ENCODE measurements at regions of chr17 and their contacts with region 1.

Region 1: GRCh38 chr17:50169121-50169764 is 3.4 kb downstream of the SGCA start:
- DNase-seq: peak; percentile 68
- H3K4me3 Mint-ChIP-seq: peak overlapping the region; percentile 52
- H3K27ac Mint-ChIP-seq: no peak overlapping the region
- H3K4me1 Mint-ChIP-seq: peaks cover 19% of the 10 kb centered on the region
- H3K27me3 Mint-ChIP-seq: no peaks in the 10 kb centered on the region

Region 2: DNA sequence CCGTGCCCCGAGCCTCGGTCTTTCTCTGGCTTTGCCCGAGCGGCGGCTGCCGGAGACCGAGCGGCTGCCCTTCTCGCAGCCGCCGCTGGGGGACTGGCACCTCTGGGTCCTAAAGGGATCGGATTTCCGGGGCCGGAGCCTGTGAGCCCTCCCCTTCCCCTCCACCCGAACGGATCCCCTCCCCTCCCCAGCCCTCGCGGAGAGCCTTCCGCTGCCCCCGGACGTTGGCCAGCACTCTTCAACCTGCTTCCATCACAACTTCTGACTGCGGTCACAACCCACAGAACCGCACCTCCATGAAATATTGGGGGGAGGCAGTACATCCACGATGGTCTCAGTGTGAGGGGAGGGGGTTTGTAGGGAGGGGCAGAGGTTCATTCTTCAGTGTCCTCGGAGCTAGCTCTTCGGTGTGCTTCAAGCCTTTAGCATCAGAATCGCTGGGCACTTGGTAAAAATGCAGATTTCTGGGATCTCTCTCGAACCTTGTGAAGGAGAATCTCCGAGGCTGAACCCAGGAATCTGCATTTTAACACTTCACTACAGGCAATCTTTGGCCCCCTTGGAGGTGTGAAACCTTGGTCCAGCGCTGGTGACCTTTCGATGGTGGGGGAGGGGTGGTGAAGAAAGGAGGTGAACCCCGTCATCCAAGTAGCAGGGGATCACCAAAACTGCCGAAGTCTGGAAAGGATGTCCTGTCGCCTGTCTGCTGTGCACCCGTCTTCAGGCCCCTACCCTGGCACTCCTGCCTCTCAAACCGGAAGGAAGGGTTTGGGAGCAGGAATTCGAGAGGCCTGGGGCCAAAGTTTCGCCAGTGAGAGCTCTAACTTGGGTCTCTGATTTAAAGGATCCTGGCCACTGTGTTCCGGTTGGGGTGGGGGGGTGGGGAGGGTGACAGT is 18.0 kb before region 1 on chr17:
- CTCF ChIA-PET with region 1: interaction called, 15 read pairs
- POLR2A ChIA-PET with region 1: interaction called, 4 read pairs
- intact Hi-C with region 1: no loop called
- DNase-seq: peak; percentile 94
- H3K4me3 Mint-ChIP-seq: peak overlapping the region; percentile 87
- H3K27ac Mint-ChIP-seq: peak overlapping the region; percentile 97
- H3K4me1 Mint-ChIP-seq: peaks cover 38% of the 10 kb centered on the region
- H3K27me3 Mint-ChIP-seq: no peaks in the 10 kb centered on the region

Region 3: DNA sequence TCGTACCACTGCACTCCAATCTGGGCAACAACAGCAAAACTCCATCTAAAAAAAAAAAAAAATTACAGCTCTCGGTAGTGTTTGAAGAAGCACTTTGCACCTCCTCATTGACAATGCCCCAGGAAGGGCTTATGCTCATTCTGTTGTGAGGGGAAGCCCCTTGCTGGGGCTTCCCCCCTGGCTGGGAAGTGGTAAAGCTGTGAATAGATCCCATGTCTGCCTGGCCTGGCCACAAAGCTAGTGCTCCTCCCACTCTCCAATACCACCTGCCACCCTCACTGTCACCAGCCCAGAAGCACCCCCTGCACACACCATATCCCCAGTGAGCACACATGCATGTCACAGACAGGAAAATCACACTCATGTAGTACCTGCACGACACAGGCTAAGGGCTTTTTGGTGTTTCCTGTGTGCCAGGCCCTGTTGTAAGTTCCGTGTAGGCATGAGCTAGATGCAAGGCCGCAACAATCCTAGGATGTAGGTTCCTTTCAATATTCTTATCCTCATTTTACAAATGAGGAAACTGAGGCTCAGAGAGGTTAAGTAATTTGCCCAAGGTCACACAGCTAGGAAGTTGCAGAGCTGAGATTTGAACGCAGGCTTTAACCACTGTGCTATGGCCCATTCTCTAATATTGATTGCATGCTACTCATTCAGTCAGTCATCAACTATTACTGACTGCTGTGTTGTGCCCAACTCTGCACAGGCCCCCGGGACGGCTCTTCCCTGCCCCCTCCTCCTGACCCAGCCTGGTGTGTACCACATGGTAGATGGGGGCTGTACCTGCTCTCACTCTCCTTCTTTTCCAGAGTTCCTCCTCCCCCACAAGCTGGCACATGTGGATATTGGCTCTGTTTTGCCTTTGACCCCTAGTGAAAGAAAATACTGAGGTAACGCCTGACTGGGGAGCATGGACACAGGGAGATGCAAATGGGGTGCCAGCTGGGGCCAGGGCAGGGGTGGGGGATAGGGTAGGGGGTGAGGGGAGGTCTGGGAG is 44.1 kb after region 1 on chr17:
- CTCF ChIA-PET with region 1: interaction called, 11 read pairs
- POLR2A ChIA-PET with region 1: no interaction called
- intact Hi-C with region 1: no loop called
- DNase-seq: peak; percentile 85
- H3K4me3 Mint-ChIP-seq: no peak overlapping the region
- H3K27ac Mint-ChIP-seq: no peak overlapping the region
- H3K4me1 Mint-ChIP-seq: peaks cover 18% of the 10 kb centered on the region
- H3K27me3 Mint-ChIP-seq: peaks cover 13% of the 10 kb centered on the region

Region 4: DNA sequence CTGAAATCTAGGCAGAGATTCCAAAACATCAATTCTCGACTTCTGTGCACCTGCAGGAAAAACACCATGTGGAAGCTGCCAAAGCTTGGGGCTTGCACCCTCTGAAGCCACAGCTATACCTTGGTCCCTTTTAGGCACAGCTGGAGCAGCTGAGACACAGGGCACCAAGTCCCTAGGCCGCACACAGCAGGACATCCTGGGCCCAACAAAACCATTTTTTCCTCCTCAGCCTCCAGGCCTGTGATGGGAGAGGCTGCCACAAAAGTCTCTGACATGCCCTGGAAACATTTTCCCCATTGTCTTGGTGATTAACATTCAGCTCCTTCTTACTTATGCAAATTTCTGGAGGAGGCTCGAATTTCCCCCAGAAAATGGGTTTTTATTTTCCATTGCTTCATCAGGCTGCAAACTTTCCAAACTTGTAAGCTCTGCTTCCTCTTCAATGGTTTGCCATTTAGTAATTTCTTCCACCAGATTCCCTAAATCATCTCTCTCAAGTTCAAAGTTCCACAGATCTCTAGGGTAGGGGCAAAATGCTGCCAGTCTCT is 56.5 kb after region 1 on chr17:
- CTCF ChIA-PET with region 1: no interaction called
- POLR2A ChIA-PET with region 1: no interaction called
- intact Hi-C with region 1: no loop called
- DNase-seq: no peak
- H3K4me3 Mint-ChIP-seq: no peak overlapping the region
- H3K27ac Mint-ChIP-seq: no peak overlapping the region
- H3K4me1 Mint-ChIP-seq: peaks cover 4% of the 10 kb centered on the region
- H3K27me3 Mint-ChIP-seq: peaks cover 1% of the 10 kb centered on the region

Region 5: DNA sequence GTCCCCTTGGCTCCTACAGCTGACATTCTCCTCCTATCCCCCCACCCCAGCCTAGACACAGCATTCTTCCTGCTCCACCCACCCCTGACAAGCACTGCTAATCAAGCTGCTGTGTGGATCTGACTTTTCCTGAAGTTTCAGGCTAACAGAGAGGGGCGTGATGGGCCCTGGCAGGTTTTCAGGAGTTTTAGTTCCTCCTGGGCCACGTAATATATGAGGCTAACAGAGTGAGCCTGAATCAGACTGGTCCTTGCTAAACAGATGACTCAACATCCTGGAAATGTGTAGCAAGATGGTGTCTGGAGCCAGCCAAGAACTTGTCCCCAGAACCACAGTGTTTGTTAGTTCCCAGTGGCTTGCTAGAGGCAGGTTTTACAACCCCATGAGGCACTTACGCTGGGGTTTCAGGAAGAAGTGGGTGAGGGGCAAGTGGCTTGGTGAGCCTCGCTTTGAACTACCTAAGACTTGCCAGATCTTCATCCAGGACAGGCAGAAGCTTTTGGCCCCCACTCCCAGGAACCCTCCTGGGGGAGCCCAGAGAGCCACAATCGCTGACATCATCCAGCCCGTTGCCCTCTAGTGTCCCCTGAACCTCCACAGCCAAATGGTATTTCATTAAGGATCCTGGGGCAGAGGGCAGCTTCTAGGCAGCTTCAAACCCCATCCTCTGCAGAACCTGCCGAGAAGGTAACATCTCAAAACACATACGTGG is 120.9 kb after region 1 on chr17:
- CTCF ChIA-PET with region 1: interaction called, 35 read pairs
- POLR2A ChIA-PET with region 1: no interaction called
- intact Hi-C with region 1: no loop called
- DNase-seq: peak; percentile 61
- H3K4me3 Mint-ChIP-seq: no peak overlapping the region
- H3K27ac Mint-ChIP-seq: peak overlapping the region; percentile 79
- H3K4me1 Mint-ChIP-seq: peaks cover 19% of the 10 kb centered on the region
- H3K27me3 Mint-ChIP-seq: peaks cover 19% of the 10 kb centered on the region